Sciatic nerve (tissue), 2 donors: ENCODE measurements at regions of chr1 and their contacts with region 1.

Region 1: DNA sequence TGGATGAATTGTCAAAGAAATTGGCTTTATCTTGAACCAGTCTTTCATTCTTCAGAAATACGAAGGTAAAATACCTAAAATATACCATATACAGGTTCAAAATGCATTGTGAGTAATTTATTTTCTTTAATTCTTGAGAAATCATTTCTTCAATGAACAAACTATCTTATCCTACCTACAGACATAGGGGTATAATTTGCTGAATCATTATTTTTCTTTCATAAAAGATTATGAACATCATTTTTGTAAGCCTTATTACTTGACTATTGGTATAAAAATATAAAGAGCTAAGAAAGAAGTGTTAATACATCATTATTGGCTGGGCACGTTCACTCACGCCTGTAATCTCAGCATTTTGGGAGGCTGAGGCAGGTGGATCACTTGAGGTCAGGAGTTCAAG is 167.7 kb downstream of the DNAH14 start:
- DNase-seq: no peak
- ATAC-seq: no peak

Region 2: GRCh38 chr1:224647449-224647848 is 449.7 kb before region 1 on chr1:
- intact Hi-C with region 1: no loop called
- DNase-seq: no peak
- ATAC-seq: no peak

Region 3: DNA sequence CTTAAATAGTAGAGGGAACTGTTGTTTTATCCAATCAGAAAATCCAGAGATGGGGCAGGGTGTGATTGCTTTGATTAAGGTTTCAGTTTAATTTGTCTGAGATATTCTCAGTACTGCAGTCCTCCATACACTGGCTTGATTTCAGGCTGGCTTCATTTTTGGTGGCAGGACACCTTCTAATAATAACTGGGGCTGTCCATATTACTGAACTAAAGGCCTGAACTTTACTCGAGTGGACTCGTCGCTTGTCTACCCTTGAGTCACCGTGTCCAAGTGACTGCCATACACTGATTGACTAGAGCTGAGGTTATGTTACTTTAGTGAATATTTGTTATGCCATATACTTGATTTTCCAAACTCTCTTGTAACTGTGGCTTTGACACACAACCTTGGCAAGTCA is 61.1 kb after region 1 on chr1:
- intact Hi-C with region 1: loop called (anchors 2 kb)
- DNase-seq: no peak
- ATAC-seq: no peak